ENCODE measurements at regions of chr6 and their contacts with region 1.

Region 1: DNA sequence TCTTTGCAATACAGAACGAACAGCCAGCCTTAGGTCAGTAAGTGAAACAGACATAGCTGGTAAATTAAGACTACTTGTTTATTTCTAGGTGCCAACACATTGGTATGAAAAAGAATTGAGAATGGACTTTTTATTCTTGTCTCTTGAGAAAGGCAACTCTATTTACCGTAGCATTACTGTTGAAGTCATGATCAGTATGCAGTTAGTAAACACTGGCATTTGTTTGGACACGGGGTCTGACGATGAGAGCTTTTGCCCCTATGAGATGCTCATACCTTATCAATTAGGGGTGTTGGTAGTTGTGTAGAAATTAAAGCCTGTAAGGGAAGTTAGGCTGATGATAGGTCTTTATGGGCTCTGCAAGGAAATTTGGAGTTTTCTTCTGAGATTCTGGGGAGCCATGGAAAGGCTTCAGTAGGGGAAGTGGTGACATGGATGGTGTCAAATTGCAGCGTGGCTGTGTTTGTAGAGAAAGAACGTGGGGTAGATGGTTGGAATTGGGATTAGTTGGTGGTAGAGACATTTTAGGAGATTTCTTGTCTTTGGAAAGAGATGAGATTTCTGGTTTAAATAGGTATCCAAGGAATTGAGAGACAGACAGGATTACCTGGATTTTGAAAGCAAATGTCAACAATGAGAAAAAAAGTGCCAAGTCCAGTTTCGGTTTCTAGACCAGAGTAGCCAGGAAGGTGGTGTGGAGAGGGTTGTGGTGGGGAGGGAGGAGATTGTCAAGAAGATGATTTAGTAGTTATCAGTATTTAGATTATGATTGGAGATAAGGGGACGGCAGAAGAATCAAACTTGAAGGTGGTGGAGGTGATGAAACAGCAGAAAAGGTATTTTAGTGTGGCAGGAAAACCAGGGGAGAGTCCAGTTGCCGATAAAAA is 116.6 kb downstream of the JARID2 start:
- H3K4me3 ChIP-seq: no peak overlapping the region
- H3K27ac ChIP-seq: no peak overlapping the region; the same call in 1 of the 2 replicates
- H3K4me1 ChIP-seq: peaks cover 63% of the 10 kb centered on the region
- CTCF ChIP-seq: no peak

Region 2: GRCh38 chr6:15372932-15373331 is 10.4 kb after region 1 on chr6:
- CTCF ChIA-PET with region 1: interaction called, 3 read pairs
- POLR2A ChIA-PET with region 1: interaction called, 12 read pairs
- H3K4me3 ChIP-seq: no peak overlapping the region
- H3K27ac ChIP-seq: no peak overlapping the region
- H3K4me1 ChIP-seq: peaks cover 5% of the 10 kb centered on the region
- CTCF ChIP-seq: no peak

Region 3: DNA sequence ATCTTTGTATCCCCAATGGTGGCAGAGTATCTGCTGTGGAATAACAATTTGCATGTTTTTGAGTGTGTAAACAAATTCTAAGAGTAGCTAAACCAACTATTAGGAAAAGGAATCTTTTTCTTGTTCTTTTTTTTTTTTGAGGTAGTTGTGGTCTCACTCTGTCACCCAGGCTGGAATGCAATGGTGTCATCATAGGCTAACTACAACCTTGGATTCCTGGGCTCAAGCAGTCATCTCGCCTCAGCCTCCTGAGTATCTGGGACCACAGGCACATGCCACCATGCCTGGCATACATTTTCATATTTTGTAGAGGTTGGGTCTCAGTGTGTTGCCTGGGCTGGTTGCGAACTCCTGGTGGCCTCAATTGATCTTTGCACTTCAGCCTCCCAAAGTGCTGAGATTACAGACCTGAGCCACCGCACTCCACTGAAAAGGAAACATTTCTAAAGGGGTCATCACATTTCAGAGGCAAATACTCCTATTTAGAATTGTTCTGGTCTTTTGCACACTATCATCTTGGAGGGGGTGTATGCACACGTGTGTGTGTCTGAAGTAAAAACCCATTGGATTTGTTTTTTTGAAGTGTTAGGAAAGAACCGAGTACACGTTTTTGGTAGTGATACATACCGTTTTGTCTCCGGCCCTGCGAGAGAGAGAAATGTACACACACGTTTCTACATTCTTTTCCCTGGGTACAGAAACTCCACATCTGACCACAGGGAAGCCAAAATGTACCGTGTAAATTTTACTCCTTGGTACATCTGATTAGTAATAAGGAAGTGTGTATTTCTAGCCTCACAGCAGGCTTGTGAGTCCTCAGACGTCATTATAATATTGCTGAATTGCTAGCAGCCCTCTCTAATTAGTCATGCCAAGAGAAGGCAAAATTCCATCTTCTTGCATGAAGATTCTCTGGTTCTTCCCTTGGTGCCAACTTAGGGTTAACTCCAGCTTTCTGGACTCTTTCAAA is 66.9 kb after region 1 on chr6:
- CTCF ChIA-PET with region 1: no interaction called
- POLR2A ChIA-PET with region 1: no interaction called
- H3K4me3 ChIP-seq: no peak overlapping the region
- H3K27ac ChIP-seq: no peak overlapping the region
- H3K4me1 ChIP-seq: peaks cover 57% of the 10 kb centered on the region
- CTCF ChIP-seq: no peak